ENCODE measurements at regions of chr2 and their contacts with region 1.

Region 1: DNA sequence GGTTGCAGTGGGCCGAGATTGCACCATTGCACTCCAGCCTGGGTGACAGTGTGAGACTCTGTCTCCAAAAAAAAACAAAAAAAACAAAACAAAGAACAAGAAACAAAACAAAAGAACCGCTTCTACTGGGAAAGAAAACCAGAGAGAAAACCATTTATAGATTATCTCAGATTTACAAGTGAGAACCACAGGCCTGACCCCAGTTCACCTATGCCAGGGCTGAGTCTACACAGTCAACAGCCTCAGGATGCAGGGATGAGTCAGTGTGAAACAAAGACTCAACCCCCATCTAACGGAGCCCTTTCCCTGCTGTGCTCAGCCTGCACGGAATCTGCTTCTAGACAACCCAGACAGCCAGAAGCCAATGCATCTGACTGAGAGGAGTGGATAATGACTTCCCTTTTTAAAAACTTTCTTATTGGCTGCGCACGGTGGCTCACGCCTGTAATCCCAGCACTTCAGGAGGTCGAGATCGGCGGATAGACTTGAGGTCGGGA is 25.5 kb upstream of the YWHAQ start:
- DNase-seq: peak in 1 of 9 donors; percentile 63
- ATAC-seq: peak; percentile 86
- H3K4me3 ChIP-seq: no peak overlapping the region
- H3K4me3 Mint-ChIP-seq: peak overlapping the region in 1 of 10 donors; percentile 68
- H3K27ac ChIP-seq: no peak overlapping the region
- H3K27ac Mint-ChIP-seq: peak overlapping the region in 1 of 9 donors; percentile 83
- H3K4me1 ChIP-seq: peaks cover 0 to 11% of the 10 kb centered on the region in 2 donors
- H3K4me1 Mint-ChIP-seq: peaks cover 0 to 36% (median 0%) of the 10 kb centered on the region in 7 donors
- H3K27me3 ChIP-seq: no peaks in the 10 kb centered on the region
- H3K27me3 Mint-ChIP-seq: peaks cover 0 to 8% (median 0%) of the 10 kb centered on the region in 5 donors

Region 2: GRCh38 chr2:9641641-9642040 is 14.7 kb before region 1 on chr2:
- CTCF ChIA-PET with region 1: no interaction called
- POLR2A ChIA-PET with region 1: no interaction called
- intact Hi-C with region 1: loop called in 1 of 2 experiments (anchors 2 kb)
- DNase-seq: no peak
- ATAC-seq: peak; percentile 43
- H3K4me3 ChIP-seq: no peak overlapping the region
- H3K4me3 Mint-ChIP-seq: peak overlapping the region in 2 of 10 donors; percentile 14 to 71
- H3K27ac ChIP-seq: no peak overlapping the region
- H3K27ac Mint-ChIP-seq: peak overlapping the region in 1 of 9 donors; percentile 68
- H3K4me1 ChIP-seq: peaks cover 0 to 7% of the 10 kb centered on the region in 2 donors
- H3K4me1 Mint-ChIP-seq: peaks cover 0 to 29% (median 3%) of the 10 kb centered on the region in 7 donors
- H3K27me3 ChIP-seq: no peaks in the 10 kb centered on the region
- H3K27me3 Mint-ChIP-seq: peaks cover 0 to 15% (median 4%) of the 10 kb centered on the region in 5 donors

Region 3: GRCh38 chr2:9703085-9703641 is 46.8 kb after region 1 on chr2:
- CTCF ChIA-PET with region 1: no interaction called
- POLR2A ChIA-PET with region 1: no interaction called
- intact Hi-C with region 1: loop called in 1 of 2 experiments (anchors 1 kb)
- DNase-seq: peak in 8 of 9 donors; percentile 7 to 77 (median 44)
- ATAC-seq: peak; percentile 90
- H3K4me3 ChIP-seq: peak overlapping the region; percentile 16
- H3K4me3 Mint-ChIP-seq: peak overlapping the region in 2 of 10 donors; percentile 23 to 26
- H3K27ac ChIP-seq: no peak overlapping the region
- H3K27ac Mint-ChIP-seq: peak overlapping the region in 1 of 9 donors; percentile 78
- H3K4me1 ChIP-seq: peaks cover 7 to 31% of the 10 kb centered on the region in 2 donors
- H3K4me1 Mint-ChIP-seq: peaks cover 8 to 39% (median 13%) of the 10 kb centered on the region in 7 donors
- H3K27me3 ChIP-seq: no peaks in the 10 kb centered on the region
- H3K27me3 Mint-ChIP-seq: peaks cover 0 to 4% (median 0%) of the 10 kb centered on the region in 5 donors

Region 4: GRCh38 chr2:10120158-10120886 is 464.0 kb after region 1 on chr2:
- CTCF ChIA-PET with region 1: no interaction called
- POLR2A ChIA-PET with region 1: no interaction called
- intact Hi-C with region 1: no loop called
- DNase-seq: peak; percentile 75 to 95 (median 88)
- ATAC-seq: peak; percentile 87
- H3K4me3 ChIP-seq: peak overlapping the region; percentile 94
- H3K4me3 Mint-ChIP-seq: peak overlapping the region; percentile 81 to 99 (median 98)
- H3K27ac ChIP-seq: peak overlapping the region; percentile 41
- H3K27ac Mint-ChIP-seq: peak overlapping the region; percentile 76 to 99 (median 93)
- H3K4me1 ChIP-seq: peaks cover 24 to 29% of the 10 kb centered on the region in 2 donors
- H3K4me1 Mint-ChIP-seq: peaks cover 21 to 57% (median 38%) of the 10 kb centered on the region in 7 donors
- H3K27me3 ChIP-seq: peaks cover 0 to 7% of the 10 kb centered on the region in 2 donors
- H3K27me3 Mint-ChIP-seq: peaks cover 0 to 21% (median 10%) of the 10 kb centered on the region in 5 donors

Region 5: DNA sequence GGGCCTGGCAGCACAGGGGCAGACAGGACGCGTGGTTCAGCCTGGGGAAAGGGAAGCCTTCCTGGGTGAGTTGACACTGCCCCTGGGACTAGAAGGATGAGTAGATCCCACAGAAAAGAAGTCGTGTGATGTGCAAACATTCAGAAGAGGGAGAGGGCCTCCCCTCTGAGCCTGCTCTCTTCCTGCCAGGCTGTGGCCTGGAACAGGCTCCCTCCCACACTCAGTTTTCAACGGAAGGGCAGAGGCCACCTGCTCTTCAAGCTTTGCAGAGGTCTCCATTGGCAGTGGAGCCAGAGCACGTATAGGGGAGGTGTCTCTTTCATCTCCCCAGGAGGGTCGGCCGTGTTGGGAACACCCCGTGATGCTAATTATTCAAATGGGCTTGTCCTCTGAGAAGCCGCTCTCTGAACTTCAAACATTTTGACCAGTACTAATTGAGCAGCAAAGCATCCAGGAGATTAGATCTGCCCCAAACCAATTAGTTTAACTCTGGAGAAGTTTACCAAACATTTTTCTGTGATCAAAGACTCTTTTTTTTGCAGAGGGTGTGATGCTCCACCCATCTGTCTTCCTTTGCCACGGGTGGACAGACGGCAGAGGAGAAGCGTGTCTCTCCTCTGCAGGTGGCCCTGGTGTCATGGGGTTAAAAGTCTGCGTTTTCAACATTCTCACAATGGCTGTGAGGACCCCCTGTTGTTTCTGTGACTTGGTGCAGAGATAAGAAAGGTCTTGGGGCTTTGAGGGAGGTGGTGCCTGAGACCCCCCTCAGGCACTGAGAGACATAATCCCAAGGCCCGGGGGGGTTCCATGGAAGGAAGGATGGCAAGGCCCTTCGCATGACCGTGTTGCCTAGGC is 821.4 kb after region 1 on chr2:
- CTCF ChIA-PET with region 1: no interaction called
- POLR2A ChIA-PET with region 1: no interaction called
- intact Hi-C with region 1: no loop called
- DNase-seq: no peak
- ATAC-seq: no peak
- H3K4me3 ChIP-seq: no peak overlapping the region
- H3K4me3 Mint-ChIP-seq: peak overlapping the region in 2 of 10 donors; percentile 6 to 45
- H3K27ac ChIP-seq: no peak overlapping the region
- H3K27ac Mint-ChIP-seq: peak overlapping the region in 4 of 9 donors; percentile 6 to 88 (median 52)
- H3K4me1 ChIP-seq: peaks cover 0 to 6% of the 10 kb centered on the region in 2 donors
- H3K4me1 Mint-ChIP-seq: peaks cover 7 to 20% (median 14%) of the 10 kb centered on the region in 7 donors
- H3K27me3 ChIP-seq: no peaks in the 10 kb centered on the region
- H3K27me3 Mint-ChIP-seq: peaks cover 0 to 14% (median 0%) of the 10 kb centered on the region in 5 donors